KBM-7 (cell line): ENCODE measurements at regions of chr9 and their contacts with region 1.

Region 1: DNA sequence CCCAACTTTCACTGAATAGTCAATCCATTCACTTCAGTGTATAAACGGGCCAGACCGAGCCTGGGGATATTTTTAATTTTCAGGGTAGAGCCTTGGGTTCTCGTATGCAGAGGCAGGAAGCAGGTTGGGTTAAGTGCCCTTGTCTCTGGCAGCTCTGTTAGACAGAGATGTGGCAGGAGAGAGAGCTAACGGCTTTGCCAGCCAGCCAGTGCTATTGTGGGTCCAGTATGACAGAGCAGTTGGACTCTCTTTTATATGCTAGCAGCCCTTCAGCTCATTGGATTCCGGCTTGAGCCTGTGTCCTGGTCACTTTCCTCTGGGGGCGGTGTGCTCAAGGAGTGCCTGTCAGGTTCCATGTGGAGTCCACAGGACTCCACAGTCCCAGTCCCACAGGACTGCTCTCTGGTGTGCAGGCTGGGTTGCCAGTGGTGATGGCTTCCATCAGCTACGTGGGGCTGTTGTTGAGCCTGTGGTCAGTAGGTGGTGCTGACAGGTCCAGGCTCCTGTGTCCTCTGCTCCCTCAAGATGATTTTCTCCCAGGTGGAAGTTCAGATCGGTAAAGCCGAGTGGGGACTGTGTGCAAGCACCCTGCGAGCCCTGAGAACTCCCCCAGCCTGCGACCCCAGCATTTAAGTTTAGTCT is 14.3 kb downstream of the CLTA start:
- DNase-seq: no peak

Region 2: DNA sequence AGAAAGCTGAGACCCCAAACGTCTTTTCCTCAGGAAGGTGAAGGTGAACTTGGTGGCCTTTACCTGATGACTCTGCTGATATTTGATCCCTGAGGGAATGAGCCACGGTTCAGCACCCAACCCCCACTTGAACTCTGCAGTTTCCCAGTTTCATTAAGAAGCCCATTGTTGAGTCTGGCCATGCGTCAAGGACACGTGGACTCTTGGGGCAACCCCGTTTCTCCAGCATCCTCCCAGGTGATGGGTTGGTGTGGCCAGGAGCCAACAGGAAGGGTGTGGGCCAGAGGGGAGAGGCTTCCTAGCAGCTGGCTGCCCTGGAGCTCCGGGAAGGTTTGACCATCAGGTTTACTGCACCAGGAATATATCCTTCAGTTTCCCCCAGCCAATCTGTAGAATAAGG is 112.7 kb after region 1 on chr9:
- in situ Hi-C with region 1: loop called (anchors 25 kb)
- DNase-seq: no peak